ENCODE measurements at regions of chr19 and their contacts with region 1.

Region 1: GRCh38 chr19:49118565-49119410 is at the start of gene C19orf73:
- DNase-seq: peak; percentile 97
- total RNA-seq, gene C19orf73: 1.0 TPM

Region 2: DNA sequence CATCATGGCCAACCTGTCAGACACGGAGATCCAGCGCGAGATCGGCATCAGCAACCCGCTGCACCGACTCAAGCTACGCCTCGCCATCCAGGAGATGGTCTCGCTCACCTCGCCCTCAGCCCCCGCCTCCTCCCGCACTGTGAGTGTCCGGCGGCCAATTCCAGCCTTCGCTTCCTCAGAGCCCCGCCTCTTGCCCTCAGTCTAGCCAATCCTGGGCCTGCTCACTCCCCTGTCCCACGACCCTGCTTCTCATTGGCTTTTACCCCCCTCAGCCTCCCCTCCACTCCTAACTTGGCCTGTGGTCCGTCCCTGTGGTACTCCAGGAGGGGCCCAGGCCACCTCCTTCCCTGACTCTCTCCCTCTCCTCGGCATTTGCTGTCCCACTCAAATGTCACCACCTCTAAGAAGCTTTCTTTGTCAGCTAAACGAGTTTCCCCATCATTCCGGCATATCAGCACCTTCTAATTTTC is 24.1 kb after region 1 on chr19:
- intact Hi-C with region 1: loop called (anchors 2 kb)
- DNase-seq: peak; percentile 94